ENCODE measurements at regions of chr15 and their contacts with region 1.

Region 1: GRCh38 chr15:80455668-80456442 is 51.7 kb downstream of the ARNT2 start:
- DNase-seq: peak; percentile 87
- H3K4me3 ChIP-seq: no peak overlapping the region
- CTCF ChIP-seq: peak; percentile 83

Region 2: DNA sequence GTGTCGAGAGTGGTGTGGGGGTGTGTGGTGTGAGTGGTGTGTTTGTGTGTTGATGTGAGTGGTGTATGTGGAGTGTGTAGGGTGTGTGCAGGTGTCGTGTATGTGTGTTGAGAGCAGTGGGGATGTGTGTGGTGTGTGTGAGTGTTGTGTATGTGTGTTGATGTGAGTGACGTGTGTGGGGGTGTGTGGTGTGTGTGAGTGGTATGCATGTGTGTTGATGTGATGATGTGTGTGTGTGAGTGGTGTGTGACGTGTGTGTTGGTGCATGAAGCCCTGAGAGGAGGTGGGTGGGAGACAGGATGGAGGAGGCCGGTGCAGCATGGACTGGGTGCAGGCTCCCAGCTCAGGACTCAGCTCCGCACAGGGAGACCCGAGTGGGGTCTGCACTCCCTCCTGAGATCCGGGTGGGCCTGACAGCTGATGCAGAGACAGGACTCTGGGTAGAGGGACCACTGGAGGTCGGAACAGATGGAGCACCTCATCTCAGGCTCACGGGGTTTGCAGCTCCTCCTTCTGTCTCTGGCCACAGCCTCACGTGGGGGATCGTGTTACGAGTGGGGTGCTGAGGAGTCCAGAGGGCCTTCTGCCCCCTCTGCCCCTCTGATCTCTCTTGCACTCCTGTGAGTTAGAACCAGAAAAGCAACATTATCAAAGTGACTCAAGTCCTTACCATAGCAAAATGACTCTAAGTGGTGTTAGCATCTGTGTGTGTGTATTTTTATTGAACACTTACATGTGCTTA is 10.4 kb before region 1 on chr15:
- CTCF ChIA-PET with region 1: interaction called, 24 read pairs
- POLR2A ChIA-PET with region 1: no interaction called
- DNase-seq: no peak
- H3K4me3 ChIP-seq: no peak overlapping the region
- CTCF ChIP-seq: no peak

Region 3: DNA sequence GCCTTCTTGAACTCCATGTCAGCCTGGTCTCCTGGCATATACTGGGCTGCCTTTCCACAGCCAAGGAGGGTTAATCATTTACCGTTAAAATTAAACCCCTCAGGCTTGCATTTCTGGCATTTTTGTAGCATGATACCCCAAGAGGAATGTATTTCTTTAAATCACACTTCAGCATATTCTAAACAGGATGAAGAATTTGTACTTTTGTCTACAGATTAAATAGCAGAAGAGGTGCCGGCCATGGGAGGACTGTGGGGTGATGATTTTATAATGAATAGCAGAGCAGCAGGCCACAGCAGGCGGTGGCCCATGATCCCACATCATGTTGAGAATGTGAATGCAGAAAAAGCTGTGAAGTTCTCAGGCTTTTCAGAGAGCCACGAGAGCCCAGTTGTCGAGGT is 38.5 kb after region 1 on chr15:
- CTCF ChIA-PET with region 1: interaction called, 14 read pairs
- POLR2A ChIA-PET with region 1: no interaction called
- DNase-seq: no peak
- H3K4me3 ChIP-seq: no peak overlapping the region
- CTCF ChIP-seq: no peak

Region 4: DNA sequence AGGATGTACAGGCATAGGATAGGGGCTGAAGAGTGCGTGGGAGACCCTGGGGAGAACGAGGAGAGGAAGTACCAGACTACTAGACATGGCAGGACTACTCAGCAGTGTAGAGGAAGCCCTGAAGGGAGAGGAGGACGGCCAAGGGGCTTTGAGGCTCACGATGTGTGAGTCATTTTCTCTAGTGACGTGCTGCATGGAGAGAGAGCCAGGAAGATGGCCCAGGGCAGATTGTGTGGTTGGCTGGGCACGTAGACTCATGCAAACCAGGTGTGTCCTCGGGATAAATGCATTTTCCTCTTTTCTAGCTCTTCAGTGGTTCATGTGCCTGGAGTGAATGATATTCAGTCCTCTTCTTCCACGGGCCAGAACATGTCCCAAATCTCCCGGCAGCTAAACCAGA is 124.3 kb after region 1 on chr15:
- CTCF ChIA-PET with region 1: interaction called, 13 read pairs
- POLR2A ChIA-PET with region 1: no interaction called
- DNase-seq: peak; percentile 57
- H3K4me3 ChIP-seq: no peak overlapping the region
- CTCF ChIP-seq: no peak

Region 5: GRCh38 chr15:80660122-80660521 is 204.3 kb after region 1 on chr15:
- CTCF ChIA-PET with region 1: interaction called, 12 read pairs
- POLR2A ChIA-PET with region 1: no interaction called
- DNase-seq: no peak
- H3K4me3 ChIP-seq: no peak overlapping the region
- CTCF ChIP-seq: peak; percentile 65

Region 6: GRCh38 chr15:80783260-80783659 is 327.4 kb after region 1 on chr15:
- CTCF ChIA-PET with region 1: interaction called, 200 read pairs
- POLR2A ChIA-PET with region 1: interaction called, 13 read pairs
- DNase-seq: no peak
- H3K4me3 ChIP-seq: no peak overlapping the region; the same call in none of the 2 replicates
- CTCF ChIP-seq: no peak